IMR-90 (cell line): ENCODE measurements at regions of chr18 and their contacts with region 1.

Region 1: GRCh38 chr18:59744271-59744721 is 47.1 kb upstream of the CCBE1 start:
- DNase-seq: peak; percentile 96
- ATAC-seq: peak; percentile 77
- H3K4me3 ChIP-seq: no peak overlapping the region
- H3K27ac ChIP-seq: peak overlapping the region; percentile 88
- H3K4me1 ChIP-seq: peaks cover 20% of the 10 kb centered on the region
- H3K27me3 ChIP-seq: no peaks in the 10 kb centered on the region
- CTCF ChIP-seq: no peak
- POLR2A ChIP-seq: no peak
- RAD21 ChIP-seq: no peak

Region 2: DNA sequence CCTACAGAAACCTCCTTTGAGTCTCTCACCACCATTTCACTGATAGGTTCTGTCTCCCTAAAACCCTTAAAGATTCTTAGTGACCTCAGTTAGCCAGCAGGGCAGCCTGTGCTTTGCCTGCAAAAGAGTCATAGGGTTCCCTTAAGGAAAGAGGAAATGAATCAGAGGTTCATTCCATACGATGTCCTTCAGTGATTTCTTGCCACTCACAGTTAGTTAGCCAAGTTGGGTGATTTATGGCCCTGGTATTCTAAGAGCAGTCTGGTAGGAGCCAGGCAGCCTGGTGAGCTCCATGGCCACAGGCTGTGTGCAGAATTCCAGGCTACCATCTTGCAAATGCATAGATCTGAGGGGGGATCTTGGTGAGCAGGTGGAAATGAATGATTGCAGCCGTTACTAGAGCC is 28.3 kb before region 1 on chr18:
- CTCF ChIA-PET with region 1: interaction called, 5 read pairs
- POLR2A ChIA-PET with region 1: no interaction called
- dilution Hi-C with region 1: no loop called
- in situ Hi-C with region 1: no loop called
- intact Hi-C with region 1: loop called (anchors 1 kb)
- DNase-seq: peak; percentile 95
- ATAC-seq: peak; percentile 61
- H3K4me3 ChIP-seq: no peak overlapping the region
- H3K27ac ChIP-seq: peak overlapping the region; percentile 35
- H3K4me1 ChIP-seq: peaks cover 37% of the 10 kb centered on the region
- H3K27me3 ChIP-seq: no peaks in the 10 kb centered on the region
- CTCF ChIP-seq: 0 out of 2 replicates have a peak, but pooled peaks have one; percentile 16
- POLR2A ChIP-seq: no peak
- RAD21 ChIP-seq: peak; percentile 31; the same call in 1 of the 2 replicates